Activated T-helper 2 cell treated with anti-CD3 and anti-CD28 coated beads, Interferon-gamma antibody, Interleukin-2, Interleukin-4, amounts not matched to agents 10 μg/mL and 5 μg/mL and 100 μg/mL, durations not matched to agents 14 hours and 24 hours and 36 hours (primary cell): ENCODE measurements at regions of chr15 and their contacts with region 1.

Region 1: GRCh38 chr15:92917606-92918407 is 17.7 kb downstream of the CHD2 start:
- DNase-seq: peak; percentile 87
- H3K4me3 Mint-ChIP-seq: peak overlapping the region; percentile 33
- H3K27ac Mint-ChIP-seq: peak overlapping the region; percentile 82
- H3K4me1 Mint-ChIP-seq: peaks cover 77% of the 10 kb centered on the region
- H3K27me3 Mint-ChIP-seq: no peaks in the 10 kb centered on the region

Region 2: DNA sequence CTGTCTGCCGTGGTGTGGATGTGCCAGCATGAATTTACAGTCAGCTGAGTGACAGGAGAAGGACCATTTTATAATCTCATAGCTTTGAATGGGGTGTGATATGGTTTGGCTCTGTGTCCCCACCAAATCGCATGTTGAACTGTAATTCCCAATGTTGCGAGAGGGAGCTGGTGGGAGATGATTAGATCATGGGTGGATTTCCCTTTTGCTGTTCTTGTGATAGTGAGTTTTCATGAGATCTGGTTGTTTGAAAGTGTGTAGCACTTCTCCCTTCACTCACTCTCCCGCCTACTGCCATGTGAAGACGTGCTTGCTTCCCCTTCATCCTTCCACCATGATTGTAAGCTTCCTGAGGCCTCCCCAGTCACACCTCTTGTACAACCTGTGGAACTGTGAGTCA is 129.6 kb before region 1 on chr15:
- intact Hi-C with region 1: no loop called
- DNase-seq: no peak
- H3K4me3 Mint-ChIP-seq: no peak overlapping the region
- H3K27ac Mint-ChIP-seq: no peak overlapping the region
- H3K4me1 Mint-ChIP-seq: no peaks in the 10 kb centered on the region
- H3K27me3 Mint-ChIP-seq: peaks cover 6% of the 10 kb centered on the region

Region 3: GRCh38 chr15:92868992-92869988 is 48.5 kb before region 1 on chr15:
- intact Hi-C with region 1: no loop called
- DNase-seq: no peak
- H3K4me3 Mint-ChIP-seq: no peak overlapping the region
- H3K27ac Mint-ChIP-seq: no peak overlapping the region
- H3K4me1 Mint-ChIP-seq: peaks cover 4% of the 10 kb centered on the region
- H3K27me3 Mint-ChIP-seq: peaks cover 2% of the 10 kb centered on the region

Region 4: DNA sequence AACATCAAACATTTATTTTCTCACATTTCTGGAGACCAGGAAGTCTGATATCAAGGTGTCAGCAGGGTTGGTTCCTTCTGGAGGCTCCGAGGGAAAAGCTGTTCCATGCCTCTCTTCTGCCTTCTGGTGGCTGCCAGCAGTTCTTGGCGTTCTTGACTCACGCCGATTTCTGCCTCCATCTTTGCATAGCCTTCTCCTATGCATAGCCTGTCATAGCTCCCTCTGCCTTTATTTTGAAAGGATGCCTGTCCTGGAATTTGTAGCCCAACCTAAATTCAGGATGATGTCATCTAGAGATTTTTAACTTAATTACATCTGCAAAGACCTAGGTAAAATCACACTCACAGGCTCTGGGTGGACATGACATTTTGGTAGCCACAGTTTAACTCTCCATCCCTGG is 100.8 kb after region 1 on chr15:
- intact Hi-C with region 1: loop called (anchors 10 kb)
- DNase-seq: no peak
- H3K4me3 Mint-ChIP-seq: no peak overlapping the region
- H3K27ac Mint-ChIP-seq: peak overlapping the region; percentile 50
- H3K4me1 Mint-ChIP-seq: peaks cover 65% of the 10 kb centered on the region
- H3K27me3 Mint-ChIP-seq: no peaks in the 10 kb centered on the region